ENCODE measurements at regions of chr4 and their contacts with region 1.

Region 1: DNA sequence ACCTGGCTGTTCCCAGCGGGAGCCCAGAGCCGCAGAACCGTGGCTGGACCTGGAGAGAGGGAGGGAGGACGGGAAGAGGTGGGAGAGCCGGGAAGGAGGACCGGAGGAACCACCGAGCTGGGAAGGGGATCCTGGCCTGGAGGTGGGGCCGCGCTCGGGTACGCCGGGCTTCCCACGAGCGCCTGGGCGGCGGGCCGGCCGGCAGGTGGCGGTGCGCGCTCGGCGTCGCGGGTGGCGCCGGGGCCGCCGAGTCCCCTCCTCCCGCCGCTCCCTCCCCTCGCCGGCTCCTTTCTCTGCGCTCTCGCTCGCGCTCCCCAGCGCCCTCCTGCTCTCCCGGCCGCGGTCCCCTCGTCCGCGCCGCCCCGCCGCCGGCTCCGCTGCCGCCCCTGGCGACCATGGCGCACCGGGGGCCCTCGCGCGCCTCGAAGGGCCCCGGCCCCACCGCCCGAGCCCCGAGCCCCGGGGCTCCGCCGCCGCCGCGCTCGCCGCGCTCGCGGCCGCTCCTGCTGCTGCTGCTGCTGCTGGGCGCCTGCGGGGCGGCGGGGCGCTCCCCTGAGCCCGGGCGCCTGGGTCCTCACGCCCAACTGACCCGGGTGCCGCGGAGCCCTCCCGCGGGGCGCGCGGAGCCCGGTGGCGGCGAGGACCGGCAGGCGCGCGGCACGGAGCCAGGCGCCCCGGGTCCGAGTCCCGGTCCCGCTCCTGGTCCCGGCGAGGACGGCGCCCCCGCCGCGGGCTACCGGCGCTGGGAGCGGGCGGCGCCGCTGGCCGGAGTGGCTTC is at the start of gene SORCS2:
- DNase-seq: peak; percentile 64 to 97 (median 74)

Region 2: DNA sequence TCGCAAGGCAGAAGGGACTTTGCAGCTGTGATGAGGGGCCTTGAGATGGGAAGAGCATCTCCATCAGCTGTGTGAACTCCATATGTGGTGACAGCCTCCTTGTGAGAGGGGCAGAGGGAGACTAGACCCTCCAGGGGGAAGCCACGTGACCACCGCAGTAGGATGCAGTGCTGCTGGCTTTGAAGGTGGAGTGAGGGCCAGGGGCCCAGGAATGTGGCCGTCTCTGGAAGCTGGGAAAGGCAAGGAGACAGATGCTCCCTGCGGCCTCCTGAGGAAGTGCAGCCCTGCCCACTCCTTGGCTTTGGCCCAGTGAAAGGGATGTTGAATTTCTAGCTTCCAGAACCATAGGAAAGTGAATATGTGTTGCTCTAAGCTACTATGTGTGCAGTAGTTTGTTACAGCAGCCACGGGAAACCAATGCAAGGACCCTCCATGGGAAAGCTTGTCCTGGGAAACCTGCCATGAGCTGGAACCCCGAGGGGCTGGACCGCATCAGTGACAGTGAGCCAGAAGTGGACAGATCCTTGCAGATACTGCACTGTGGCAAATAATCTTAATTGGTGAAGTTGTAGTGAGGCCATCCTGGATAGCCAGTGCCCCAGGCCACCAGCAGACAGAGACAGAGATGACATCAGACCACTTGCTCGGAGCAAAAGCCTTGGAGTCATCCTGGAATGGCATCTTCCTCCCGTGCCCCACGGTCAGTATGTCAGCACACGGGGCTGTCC is 35.5 kb before region 1 on chr4:
- intact Hi-C with region 1: no loop called
- DNase-seq: peak in 7 of 10 donors; percentile 26 to 91 (median 69)

Region 3: DNA sequence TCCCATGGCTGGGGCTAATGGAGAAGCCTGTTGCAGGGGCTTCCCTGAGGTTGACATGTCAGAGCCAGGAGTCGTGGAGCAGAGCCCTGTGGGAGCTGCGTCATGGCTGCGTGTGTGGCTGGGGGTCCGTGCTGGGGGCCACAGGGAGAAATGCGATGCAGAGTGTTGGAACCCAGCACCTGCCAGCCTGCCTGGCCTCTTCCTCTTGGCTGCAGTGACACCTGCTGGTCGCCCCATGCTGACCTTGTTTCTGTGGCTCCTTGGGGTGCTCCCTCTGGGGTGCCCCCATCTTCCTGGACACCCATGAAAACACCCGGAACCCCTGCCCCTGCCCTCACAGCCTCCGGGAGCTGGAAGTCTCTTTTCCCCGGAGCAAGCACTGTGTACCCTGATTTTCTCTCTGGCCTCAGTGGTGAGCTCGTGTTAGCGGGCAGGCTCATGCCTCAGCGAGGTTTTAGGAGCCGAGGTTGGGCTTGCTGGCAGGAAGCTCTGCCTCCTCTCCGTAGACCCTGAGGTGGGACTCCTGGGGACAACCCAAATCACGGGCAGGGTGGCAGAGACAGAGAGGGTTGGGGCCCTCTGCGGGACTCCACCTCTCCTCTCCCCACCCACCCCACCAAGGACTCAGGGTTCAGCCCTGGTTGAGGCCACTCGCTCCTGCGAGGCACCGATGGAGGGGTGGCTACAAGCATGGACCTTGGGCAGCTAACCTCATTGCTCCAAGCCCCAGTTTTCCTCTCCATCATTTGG is 103.6 kb after region 1 on chr4:
- intact Hi-C with region 1: loop called (anchors 1 kb)
- DNase-seq: peak in 8 of 10 donors; percentile 55 to 94 (median 74)

Region 4: DNA sequence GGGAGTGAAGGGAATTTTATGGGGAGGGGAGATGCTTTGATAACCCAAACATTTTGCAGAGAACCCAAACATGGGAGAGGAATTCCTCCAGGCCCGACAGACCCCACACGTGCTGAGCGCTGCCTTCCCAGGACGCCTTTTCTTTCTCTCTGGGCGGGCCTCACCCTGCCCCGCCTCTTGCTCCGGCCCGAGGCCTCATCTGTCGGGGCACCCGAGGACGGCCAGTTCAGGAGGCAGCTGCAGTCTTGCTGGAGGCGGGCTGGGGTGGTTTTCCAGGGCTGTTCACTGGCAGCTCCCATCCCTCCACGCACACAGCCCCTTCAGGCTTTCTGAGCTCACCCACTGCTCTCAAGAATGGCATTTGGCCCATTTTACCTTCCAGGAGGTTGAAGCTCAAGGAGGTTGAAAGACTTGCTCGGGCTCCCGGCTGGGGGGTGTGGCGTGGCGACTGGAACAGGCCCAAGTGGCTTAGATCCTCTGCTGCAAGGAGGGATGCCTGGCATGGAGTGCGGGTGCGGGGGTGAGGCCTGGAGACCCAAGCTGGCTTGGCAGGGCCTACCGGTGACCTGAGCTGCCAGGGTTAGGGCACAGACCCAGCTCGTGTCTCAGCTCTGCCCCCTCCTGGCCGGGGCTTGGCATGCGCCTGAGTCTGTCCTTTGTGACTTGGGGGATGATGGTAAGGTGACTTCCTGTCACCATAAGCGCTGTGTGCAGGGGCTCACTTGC is 143.1 kb after region 1 on chr4:
- intact Hi-C with region 1: loop called (anchors 2 kb)
- DNase-seq: peak in 9 of 10 donors; percentile 57 to 95 (median 80)

Region 5: DNA sequence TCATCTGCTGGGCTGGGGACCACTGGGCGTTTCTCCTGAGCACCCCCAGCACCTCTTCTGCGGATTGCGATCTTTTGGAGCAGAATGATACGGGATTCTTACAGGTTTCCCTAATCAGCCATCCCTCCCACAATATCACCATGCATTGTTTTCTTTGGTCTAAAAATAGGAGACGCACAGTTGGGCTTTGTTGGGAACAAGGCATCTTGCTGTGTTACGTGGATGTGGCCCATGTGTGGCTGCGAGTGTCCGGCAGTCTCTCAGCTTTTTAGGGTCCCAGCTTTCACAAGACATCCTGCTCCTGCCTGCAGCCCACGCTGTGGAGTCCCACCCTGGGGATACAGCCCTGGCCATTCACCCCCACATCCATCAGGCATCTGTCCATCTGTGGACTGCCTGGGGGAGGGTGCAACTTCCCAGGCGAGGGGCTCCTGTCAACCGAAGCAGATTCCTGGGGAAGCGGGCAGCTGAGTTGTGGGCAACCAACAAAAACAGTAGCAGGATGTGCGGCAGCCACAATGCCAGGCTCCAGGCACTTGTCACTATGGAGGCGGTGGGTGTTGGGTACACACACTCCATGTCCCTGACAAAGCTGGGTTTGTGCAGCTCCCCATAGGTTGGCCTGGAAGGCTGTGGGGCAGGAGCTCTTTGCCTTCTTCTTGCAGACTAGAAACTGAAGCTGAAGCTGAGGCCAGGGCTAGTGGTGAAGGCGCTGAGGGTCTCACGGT is 427.8 kb after region 1 on chr4:
- intact Hi-C with region 1: no loop called
- DNase-seq: peak in 4 of 10 donors; percentile 51 to 88 (median 84)

Region 6: DNA sequence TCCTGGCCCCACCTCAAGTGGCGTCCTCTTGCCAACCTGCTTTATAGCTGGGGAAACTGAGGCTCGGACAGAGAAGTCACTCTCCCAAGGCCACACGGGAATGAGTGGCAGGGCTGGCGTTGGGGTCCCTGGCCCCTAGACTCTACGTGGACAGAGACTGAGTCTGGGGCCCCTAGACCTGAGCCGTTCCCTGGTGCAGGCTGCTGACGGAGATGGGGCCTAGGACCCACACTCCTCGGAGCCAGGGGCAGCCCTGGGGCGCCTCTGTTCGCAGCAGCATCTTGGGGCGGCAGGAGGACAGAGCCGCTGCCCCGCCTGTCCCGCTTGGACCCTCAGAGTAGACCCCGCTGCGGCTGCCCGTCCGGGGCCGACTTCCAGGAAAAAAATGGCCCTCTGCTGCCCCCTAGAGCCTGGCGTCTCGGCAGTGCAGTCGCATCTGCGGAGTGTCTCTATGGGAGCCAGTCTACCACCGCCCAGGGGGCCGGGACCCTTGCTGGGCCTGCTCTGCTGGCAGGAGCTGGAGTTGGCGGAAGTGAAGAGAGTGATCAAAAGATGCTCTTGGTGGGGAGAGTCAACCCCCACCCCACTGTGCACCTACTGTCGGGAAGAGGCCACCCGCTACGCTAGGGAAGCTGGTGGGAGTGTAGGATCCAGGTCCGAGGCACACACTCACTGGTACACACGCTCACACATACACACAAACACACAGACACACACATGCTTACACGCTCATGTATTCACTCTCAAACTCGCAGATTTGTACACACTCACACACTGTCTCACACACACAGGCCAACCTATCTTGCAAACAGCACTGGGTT is 527.1 kb after region 1 on chr4:
- intact Hi-C with region 1: loop called (anchors 1 kb)
- DNase-seq: peak; percentile 46 to 96 (median 81)

Region 7: GRCh38 chr4:7802093-7802726 is 609.8 kb after region 1 on chr4:
- intact Hi-C with region 1: loop called (anchors 5 kb)
- DNase-seq: peak; percentile 70 to 98 (median 88)

Measured in posterior cingulate gyrus (tissue), 11 donors.